ENCODE measurements at regions of chr3 and their contacts with region 1.

Region 1: DNA sequence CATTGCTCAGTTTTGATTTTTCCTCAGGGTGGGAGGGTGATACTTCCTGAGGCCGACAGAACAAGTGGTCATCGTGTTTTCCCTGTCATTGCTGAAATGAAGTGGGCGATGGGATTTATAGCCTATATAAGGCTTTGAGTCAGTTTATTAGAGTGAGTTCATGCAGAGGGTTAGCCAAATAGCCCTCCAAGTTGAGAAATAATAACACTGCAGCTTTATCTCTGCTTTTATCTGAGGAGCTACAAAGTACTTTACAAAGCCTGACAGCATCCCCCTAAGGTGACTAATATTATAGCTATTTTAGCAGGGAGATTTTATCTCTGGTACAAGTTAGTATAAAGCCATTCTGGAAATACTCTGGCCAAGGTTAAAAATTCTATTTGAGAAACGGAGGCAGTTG is 389.6 kb downstream of the MFSD1 start:
- DNase-seq: peak; percentile 96
- ATAC-seq: peak; percentile 89
- H3K4me3 ChIP-seq: peak overlapping the region; percentile 1; the same call in 1 of the 2 replicates
- H3K27ac ChIP-seq: peak overlapping the region; percentile 44
- H3K4me1 ChIP-seq: peaks cover 28% of the 10 kb centered on the region
- H3K27me3 ChIP-seq: no peaks in the 10 kb centered on the region
- CTCF ChIP-seq: no peak

Region 2: DNA sequence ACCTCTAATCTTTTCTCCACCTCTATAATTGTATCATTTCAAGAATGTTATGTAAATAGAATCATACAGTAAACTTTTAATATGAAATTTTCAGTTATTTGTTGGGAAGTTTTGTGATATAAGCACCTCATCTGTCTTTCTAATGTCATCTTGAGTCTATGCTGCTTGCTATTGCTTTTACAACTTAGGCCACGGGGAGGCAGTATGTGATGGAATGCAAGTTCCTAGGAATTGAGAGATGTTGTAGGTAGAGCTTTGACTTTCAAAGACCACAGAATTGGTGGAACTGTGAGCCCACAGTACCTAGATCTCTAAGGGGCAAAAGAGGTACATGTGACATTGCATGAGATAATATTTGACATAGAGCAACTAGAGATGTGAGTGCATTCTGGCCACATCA is 61.3 kb before region 1 on chr3:
- CTCF ChIA-PET with region 1: interaction called, 4 read pairs
- POLR2A ChIA-PET with region 1: no interaction called
- intact Hi-C with region 1: loop called (anchors 10 kb)
- DNase-seq: peak; percentile 52
- ATAC-seq: no peak
- H3K4me3 ChIP-seq: no peak overlapping the region
- H3K27ac ChIP-seq: no peak overlapping the region
- H3K4me1 ChIP-seq: peaks cover 23% of the 10 kb centered on the region
- H3K27me3 ChIP-seq: no peaks in the 10 kb centered on the region
- CTCF ChIP-seq: peak; percentile 73

Region 3: GRCh38 chr3:159169828-159170227 is 21.6 kb before region 1 on chr3:
- CTCF ChIA-PET with region 1: interaction called, 6 read pairs
- POLR2A ChIA-PET with region 1: no interaction called
- intact Hi-C with region 1: loop called (anchors 2 kb)
- DNase-seq: peak; percentile 89
- ATAC-seq: peak; percentile 95
- H3K4me3 ChIP-seq: peak overlapping the region; percentile 3; the same call in 1 of the 2 replicates
- H3K27ac ChIP-seq: peak overlapping the region; percentile 76
- H3K4me1 ChIP-seq: peaks cover 59% of the 10 kb centered on the region
- H3K27me3 ChIP-seq: no peaks in the 10 kb centered on the region
- CTCF ChIP-seq: no peak